ENCODE measurements at regions of chr6 and their contacts with region 1.

Region 1: GRCh38 chr6:43193939-43194338 is 11.9 kb downstream of the CUL9 start:
- DNase-seq: no peak
- ATAC-seq: no peak
- H3K4me3 ChIP-seq: no peak overlapping the region
- H3K27ac ChIP-seq: no peak overlapping the region
- H3K4me1 ChIP-seq: peaks cover 21% of the 10 kb centered on the region
- H3K27me3 ChIP-seq: no peaks in the 10 kb centered on the region
- CTCF ChIP-seq: no peak
- EP300 ChIP-seq: no peak
- POLR2A ChIP-seq: no peak
- RAD21 ChIP-seq: no peak

Region 2: DNA sequence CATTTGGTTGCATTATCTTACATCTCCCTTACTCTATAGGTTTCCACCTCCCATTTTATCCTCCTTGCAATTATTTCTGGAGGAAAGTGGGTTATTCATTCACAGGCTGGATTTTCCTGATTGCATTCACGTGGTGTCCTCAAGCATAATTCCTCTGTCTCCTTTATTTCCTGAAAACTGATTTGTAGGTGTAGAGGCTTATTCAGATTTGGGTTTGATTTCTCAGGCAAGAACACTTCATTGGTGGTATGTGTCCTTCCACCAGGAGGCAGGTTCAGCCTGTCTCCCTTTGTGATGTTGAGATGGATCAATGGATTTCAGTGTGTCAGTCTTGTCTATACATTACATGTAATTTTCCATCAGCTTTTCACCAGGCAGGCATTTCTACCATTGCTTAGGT is 18.0 kb after region 1 on chr6:
- CTCF ChIA-PET with region 1: no interaction called
- POLR2A ChIA-PET with region 1: no interaction called
- in situ Hi-C with region 1: no loop called
- intact Hi-C with region 1: no loop called
- DNase-seq: peak; percentile 30
- ATAC-seq: peak; percentile 67
- H3K4me3 ChIP-seq: no peak overlapping the region
- H3K27ac ChIP-seq: no peak overlapping the region
- H3K4me1 ChIP-seq: no peaks in the 10 kb centered on the region
- H3K27me3 ChIP-seq: no peaks in the 10 kb centered on the region
- CTCF ChIP-seq: peak; percentile 51
- EP300 ChIP-seq: no peak
- POLR2A ChIP-seq: no peak
- RAD21 ChIP-seq: no peak

Region 3: DNA sequence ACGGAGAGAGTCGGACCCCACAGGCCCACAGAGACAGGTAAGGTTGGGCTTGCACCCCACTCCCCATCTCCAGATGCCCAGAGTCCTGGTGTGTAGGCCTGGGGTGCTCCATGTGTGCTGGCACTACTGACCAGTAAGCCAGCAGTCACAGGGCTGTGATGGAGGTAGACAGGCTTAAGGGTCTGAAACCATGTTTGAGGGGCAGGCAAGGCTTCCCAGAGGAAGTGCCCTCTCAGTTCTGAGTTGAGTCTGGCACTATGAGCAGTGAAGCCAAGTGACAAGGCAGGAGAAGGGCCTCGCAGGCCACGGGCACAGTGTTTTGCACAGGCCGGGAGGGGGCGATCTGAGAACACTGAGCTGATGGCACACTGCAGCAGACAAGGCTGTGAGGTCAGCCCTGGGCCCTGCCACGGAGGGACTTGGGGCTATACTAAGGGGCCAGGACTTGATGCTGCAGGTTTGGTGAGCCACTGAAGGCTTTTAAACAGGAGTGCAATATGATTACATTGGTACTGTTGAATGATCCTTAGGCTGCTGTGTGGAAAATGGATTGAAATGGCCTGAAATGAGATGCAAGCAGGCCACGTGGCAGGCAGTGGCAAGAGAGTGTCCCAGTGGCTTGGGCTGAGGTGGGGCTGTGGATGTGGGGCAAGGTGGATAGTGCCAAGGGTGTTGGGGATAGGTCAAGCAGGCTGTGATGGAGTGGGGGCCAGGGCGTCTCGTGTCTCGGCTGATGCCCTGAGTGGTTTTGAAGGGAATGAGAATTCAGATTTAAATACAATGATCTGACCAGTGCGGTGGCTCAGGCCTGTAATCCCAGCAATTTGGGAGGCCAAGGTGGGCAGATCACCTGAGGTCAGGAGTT is 69.6 kb after region 1 on chr6:
- CTCF ChIA-PET with region 1: no interaction called
- POLR2A ChIA-PET with region 1: no interaction called
- in situ Hi-C with region 1: no loop called
- intact Hi-C with region 1: no loop called
- DNase-seq: peak; percentile 78
- ATAC-seq: peak; percentile 73
- H3K4me3 ChIP-seq: no peak overlapping the region; a peak in 1 of 6 replicates
- H3K27ac ChIP-seq: no peak overlapping the region
- H3K4me1 ChIP-seq: peaks cover 78% of the 10 kb centered on the region
- H3K27me3 ChIP-seq: peaks cover 0 to 4% of the 10 kb centered on the region in 2 experiments; a peak in 2 of 5 replicates
- CTCF ChIP-seq: peak; percentile 100
- EP300 ChIP-seq: 0 out of 4 replicates have a peak, but pooled peaks of 1 of the 2 experiments have one; percentile 12
- POLR2A ChIP-seq: no peak
- RAD21 ChIP-seq: peak; percentile 100

Region 4: DNA sequence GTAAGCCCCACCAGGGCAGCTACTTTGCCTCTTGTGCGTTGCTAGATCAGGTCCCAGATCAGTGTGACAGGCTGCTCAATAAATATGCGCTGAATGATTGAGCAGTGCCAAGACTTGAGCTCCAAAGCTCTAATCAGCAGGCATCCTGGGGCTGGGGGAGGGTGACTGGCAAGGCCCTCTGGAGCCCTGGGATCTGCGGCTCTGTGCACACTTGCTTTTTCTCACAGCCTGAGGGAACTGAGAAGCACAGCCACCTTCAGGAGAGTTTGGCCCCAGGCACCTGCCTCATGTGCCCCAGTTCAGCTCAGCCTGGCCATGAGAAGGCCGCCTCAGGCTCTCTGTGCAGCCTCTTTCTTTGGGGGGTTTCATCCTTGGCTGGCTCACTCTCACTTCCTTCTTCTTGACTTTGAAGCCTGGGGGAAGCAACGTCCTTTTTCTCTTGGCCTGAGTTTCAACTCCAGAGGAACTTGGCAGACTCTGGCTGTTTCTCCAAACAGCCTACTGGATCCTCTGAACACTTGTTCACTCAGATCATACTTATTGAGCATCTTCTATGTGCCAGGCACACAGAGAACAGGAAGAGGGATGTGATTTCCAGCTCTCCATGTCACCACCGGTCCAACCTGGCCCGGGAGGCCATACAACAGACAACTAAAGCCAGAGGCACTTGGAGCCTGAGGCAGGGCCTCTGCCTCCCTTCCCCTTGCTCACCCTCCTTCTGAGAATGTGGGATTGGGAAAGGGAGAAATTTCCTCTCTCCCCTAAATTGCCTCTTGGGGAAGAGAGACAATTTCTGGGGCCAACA is 690.1 kb after region 1 on chr6:
- CTCF ChIA-PET with region 1: no interaction called
- POLR2A ChIA-PET with region 1: no interaction called
- in situ Hi-C with region 1: no loop called
- intact Hi-C with region 1: loop called (anchors 5 kb)
- DNase-seq: no peak
- ATAC-seq: no peak
- H3K4me3 ChIP-seq: no peak overlapping the region
- H3K27ac ChIP-seq: no peak overlapping the region
- H3K4me1 ChIP-seq: peaks cover 42% of the 10 kb centered on the region
- H3K27me3 ChIP-seq: peaks cover 10 to 12% of the 10 kb centered on the region in 2 experiments; a peak in 4 of 5 replicates
- CTCF ChIP-seq: no peak
- EP300 ChIP-seq: no peak
- POLR2A ChIP-seq: no peak
- RAD21 ChIP-seq: no peak

Measured in HepG2 (cell line).